Activated CD4-positive, alpha-beta memory T cell treated with anti-CD3 and anti-CD28 coated beads for 36 hours (primary cell): ENCODE measurements at regions of chr11 and their contacts with region 1.

Region 1: DNA sequence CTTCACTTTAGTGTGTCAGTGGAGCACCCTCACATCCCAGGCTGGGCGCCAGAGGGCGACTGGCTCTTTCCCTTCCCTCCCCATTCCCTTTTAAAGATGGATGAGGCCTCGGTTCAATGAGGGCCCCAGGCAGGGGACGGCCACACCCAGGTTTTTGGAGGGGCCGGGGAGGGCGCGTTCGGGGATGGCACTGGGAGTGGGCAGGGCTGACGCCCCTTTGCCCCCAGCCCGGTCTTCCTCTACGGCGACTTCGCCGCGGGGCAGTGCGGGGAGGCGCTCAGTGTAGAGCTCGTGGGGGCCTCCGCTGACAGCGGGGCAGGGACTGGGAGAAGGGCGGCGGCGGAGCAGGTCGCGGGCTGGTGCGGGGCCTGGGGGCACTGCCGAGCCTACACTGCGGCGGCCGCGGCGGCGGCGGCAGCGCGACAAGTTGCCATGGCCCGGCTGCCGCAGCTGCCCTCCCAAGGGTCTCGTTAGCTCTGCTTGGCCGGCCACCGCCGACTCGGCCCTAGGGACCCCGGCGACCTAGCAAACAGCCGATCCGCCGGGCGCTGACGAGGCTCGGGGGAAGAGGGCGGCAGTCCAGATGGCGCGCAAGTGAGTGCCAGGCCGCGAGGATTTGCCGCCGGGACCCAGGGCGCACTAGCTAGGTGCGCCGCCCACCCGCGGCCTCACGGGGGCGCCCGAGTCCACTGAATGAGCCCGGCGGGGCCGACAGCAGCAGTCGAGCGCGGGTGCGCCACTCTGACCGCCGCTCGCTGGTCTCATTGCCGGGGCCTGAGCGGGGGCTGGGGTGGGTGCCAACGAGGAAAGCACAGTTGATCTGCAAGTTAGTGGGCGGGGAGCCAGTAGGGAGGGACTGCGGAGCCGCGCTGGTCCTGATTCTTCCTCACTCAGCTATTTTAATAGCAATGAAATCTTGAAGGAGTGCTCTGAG is 92.7 kb downstream of the RRM1 start:
- DNase-seq: peak; percentile 90
- H3K4me3 Mint-ChIP-seq: peak overlapping the region; percentile 73
- H3K27ac Mint-ChIP-seq: no peak overlapping the region
- H3K4me1 Mint-ChIP-seq: peaks cover 2% of the 10 kb centered on the region
- H3K27me3 Mint-ChIP-seq: peaks cover 3% of the 10 kb centered on the region

Region 2: GRCh38 chr11:4393209-4393857 is 206.0 kb after region 1 on chr11 and contains the start of gene TRIM21:
- CTCF ChIA-PET with region 1: interaction called, 5 read pairs
- POLR2A ChIA-PET with region 1: no interaction called
- intact Hi-C with region 1: loop called (anchors 1 kb)
- DNase-seq: peak; percentile 95
- H3K4me3 Mint-ChIP-seq: peak within 1 kb of the TSS; percentile 90
- H3K27ac Mint-ChIP-seq: peak within 1 kb of the TSS; percentile 91
- H3K4me1 Mint-ChIP-seq: peaks cover 32% of the 10 kb centered on the region
- H3K27me3 Mint-ChIP-seq: peaks cover 13% of the 10 kb centered on the region
- total RNA-seq, gene TRIM21: 39.2 to 40.3 TPM

Region 3: DNA sequence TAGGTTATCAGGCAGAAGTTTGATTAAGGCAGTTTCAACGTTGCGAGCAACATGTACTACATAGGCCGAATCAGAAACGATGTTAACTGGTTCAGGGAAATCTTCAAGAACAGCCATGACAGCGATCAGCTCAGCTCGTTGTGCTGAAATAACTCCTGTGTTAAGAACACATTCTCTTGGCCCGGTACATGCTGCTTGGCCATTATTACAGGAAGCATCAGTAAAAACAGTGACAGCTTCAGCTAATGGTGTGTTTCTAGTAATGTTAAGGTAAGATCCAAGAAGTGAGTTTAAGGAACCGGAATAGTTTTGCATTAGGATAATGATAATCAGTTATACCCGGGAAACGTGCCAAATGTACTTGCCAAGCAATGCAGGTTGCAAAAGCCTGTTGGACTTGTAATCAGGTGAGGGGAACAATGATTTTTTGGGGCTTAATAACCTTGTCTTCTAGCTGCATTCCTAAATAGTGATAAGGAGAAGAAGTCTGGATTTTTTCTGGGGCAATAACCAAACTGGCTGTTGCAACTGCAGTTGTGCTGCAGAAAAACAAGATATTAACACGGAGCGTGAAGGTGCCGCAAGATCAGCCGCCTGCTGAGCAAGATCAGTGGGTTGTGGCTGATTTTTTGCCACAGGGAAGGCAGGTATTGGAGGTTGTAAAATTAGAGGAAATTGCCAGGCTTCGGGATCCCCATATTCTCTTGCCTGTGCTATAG is 309.4 kb after region 1 on chr11:
- CTCF ChIA-PET with region 1: interaction called, 83 read pairs
- POLR2A ChIA-PET with region 1: no interaction called
- intact Hi-C with region 1: loop called (anchors 1 kb)
- DNase-seq: no peak
- H3K4me3 Mint-ChIP-seq: no peak overlapping the region
- H3K27ac Mint-ChIP-seq: no peak overlapping the region
- H3K4me1 Mint-ChIP-seq: peaks cover 6% of the 10 kb centered on the region
- H3K27me3 Mint-ChIP-seq: peaks cover 7% of the 10 kb centered on the region

Region 4: DNA sequence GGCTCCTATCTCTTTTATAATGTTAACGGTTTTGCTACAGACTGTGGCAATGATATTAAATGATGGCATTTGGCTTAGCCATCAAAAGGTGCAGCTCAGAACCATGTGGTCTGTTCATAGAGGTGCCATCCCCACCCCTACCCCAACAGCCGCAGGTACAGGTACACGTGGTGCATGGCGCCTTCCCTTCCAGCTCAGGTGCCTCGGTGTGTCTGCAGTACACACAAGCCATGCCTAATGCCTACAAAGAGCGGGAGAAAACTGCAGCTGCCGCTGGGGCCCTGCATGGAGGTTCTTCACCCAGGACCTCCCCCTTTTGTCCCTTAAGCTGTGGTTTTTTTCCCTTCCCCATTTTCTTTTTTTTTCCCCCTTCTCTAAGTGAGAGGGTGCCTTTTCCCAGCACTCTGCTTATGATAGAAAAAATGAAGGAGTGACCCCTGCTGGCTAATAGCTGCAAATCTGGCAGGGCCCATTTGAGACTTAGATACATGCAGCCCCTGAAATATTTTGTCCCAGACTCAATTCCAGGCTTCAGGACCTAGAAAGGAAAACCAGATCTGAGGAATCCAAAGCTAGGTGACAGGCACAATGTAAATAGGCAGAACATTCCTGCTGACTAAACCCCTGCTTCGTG is 364.1 kb after region 1 on chr11:
- CTCF ChIA-PET with region 1: interaction called, 35 read pairs
- POLR2A ChIA-PET with region 1: no interaction called
- intact Hi-C with region 1: no loop called
- DNase-seq: no peak
- H3K4me3 Mint-ChIP-seq: no peak overlapping the region
- H3K27ac Mint-ChIP-seq: no peak overlapping the region
- H3K4me1 Mint-ChIP-seq: no peaks in the 10 kb centered on the region
- H3K27me3 Mint-ChIP-seq: peaks cover 7% of the 10 kb centered on the region

Region 5: GRCh38 chr11:4636962-4637661 is 449.8 kb after region 1 on chr11 and contains the start of gene OR51D1:
- CTCF ChIA-PET with region 1: interaction called, 29 read pairs
- POLR2A ChIA-PET with region 1: no interaction called
- intact Hi-C with region 1: loop called (anchors 2 kb)
- DNase-seq: peak; percentile 76
- H3K4me3 Mint-ChIP-seq: no peak within 1 kb of the TSS
- H3K27ac Mint-ChIP-seq: no peak within 1 kb of the TSS
- H3K4me1 Mint-ChIP-seq: no peaks in the 10 kb centered on the region
- H3K27me3 Mint-ChIP-seq: peaks cover 2% of the 10 kb centered on the region
- total RNA-seq, gene OR51D1: not detected

Region 6: GRCh38 chr11:4983841-4984240 is 796.5 kb after region 1 on chr11:
- CTCF ChIA-PET with region 1: no interaction called
- POLR2A ChIA-PET with region 1: no interaction called
- intact Hi-C with region 1: no loop called
- DNase-seq: no peak
- H3K4me3 Mint-ChIP-seq: no peak overlapping the region
- H3K27ac Mint-ChIP-seq: no peak overlapping the region
- H3K4me1 Mint-ChIP-seq: no peaks in the 10 kb centered on the region
- H3K27me3 Mint-ChIP-seq: no peaks in the 10 kb centered on the region

Region 7: DNA sequence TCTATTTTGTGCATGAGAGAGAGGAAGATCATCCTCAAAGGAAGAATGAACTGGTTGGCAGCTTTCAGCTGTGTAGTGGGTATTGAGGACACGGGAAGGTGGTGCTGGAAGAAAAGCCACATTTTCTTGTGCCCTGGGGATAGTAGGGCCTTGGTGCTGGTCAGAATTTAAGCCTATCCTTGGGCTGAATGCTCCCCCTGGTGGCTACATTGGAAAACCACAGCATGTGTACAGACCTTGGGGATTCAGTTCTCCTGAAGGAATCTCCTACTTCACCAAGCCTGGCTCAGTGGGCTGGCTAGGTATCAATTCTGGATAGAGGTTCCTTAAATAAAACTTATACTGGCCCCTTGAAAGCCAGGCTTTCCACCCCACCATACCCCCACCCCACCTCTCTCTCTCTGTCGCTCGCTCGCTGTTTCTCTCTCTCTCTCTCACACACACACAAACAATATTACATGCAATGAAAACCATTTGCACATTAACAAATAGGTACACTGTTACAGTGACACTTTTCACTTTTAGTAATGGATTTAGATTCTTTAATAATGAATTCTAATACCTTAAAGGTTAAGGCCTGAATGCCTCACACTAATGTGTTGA is 1193.5 kb after region 1 on chr11:
- CTCF ChIA-PET with region 1: interaction called, 4 read pairs
- POLR2A ChIA-PET with region 1: no interaction called
- intact Hi-C with region 1: loop called (anchors 5 kb)
- DNase-seq: peak; percentile 40
- H3K4me3 Mint-ChIP-seq: no peak overlapping the region
- H3K27ac Mint-ChIP-seq: no peak overlapping the region
- H3K4me1 Mint-ChIP-seq: no peaks in the 10 kb centered on the region
- H3K27me3 Mint-ChIP-seq: no peaks in the 10 kb centered on the region